Heart right ventricle (tissue), 16 donors: ENCODE measurements at regions of chr9 and their contacts with region 1.

Region 1: GRCh38 chr9:89686095-89686494 is 81.3 kb downstream of the GADD45G start:
- DNase-seq: no peak
- ATAC-seq: peak in 6 of 8 donors; percentile 16 to 69 (median 36)
- H3K4me3 ChIP-seq: no peak overlapping the region
- H3K27ac ChIP-seq: peak overlapping the region in 5 of 10 donors; percentile 73 to 79 (median 78)
- H3K4me1 ChIP-seq: peaks cover 7 to 30% (median 23%) of the 10 kb centered on the region in 9 donors
- H3K27me3 ChIP-seq: no peaks in the 10 kb centered on the region
- CTCF ChIP-seq: no peak

Region 2: GRCh38 chr9:89623925-89624420 is 62.1 kb before region 1 on chr9:
- intact Hi-C with region 1: loop called in 1 of 10 experiments (anchors 5 kb)
- DNase-seq: peak in 1 of 2 donors; percentile 50
- ATAC-seq: peak; percentile 27 to 88 (median 68)
- H3K4me3 ChIP-seq: no peak overlapping the region
- H3K27ac ChIP-seq: peak overlapping the region; percentile 25 to 88 (median 56)
- H3K4me1 ChIP-seq: peaks cover 8 to 42% (median 28%) of the 10 kb centered on the region in 9 donors
- H3K27me3 ChIP-seq: peaks cover 0 to 6% (median 0%) of the 10 kb centered on the region in 7 donors
- CTCF ChIP-seq: peak in 4 of 9 donors; percentile 26 to 35 (median 30)

Region 3: GRCh38 chr9:89743573-89744361 is 57.7 kb after region 1 on chr9:
- intact Hi-C with region 1: loop called in 1 of 10 experiments (anchors 10 kb)
- DNase-seq: no peak
- ATAC-seq: no peak
- H3K4me3 ChIP-seq: no peak overlapping the region
- H3K27ac ChIP-seq: peak overlapping the region in 1 of 10 donors; percentile 44
- H3K4me1 ChIP-seq: peaks cover 0 to 26% (median 20%) of the 10 kb centered on the region in 9 donors
- H3K27me3 ChIP-seq: no peaks in the 10 kb centered on the region
- CTCF ChIP-seq: no peak

Region 4: GRCh38 chr9:89839449-89839848 is 153.4 kb after region 1 on chr9:
- intact Hi-C with region 1: loop called in 1 of 10 experiments (anchors 5 kb)
- DNase-seq: no peak
- ATAC-seq: peak in 1 of 8 donors; percentile 40
- H3K4me3 ChIP-seq: no peak overlapping the region
- H3K27ac ChIP-seq: no peak overlapping the region
- H3K4me1 ChIP-seq: peaks cover 0 to 16% (median 7%) of the 10 kb centered on the region in 9 donors
- H3K27me3 ChIP-seq: no peaks in the 10 kb centered on the region
- CTCF ChIP-seq: no peak